ENCODE measurements at regions of chr10 and their contacts with region 1.

Region 1: GRCh38 chr10:98467506-98468346 is 21.0 kb upstream of the HPS1 start:
- DNase-seq: peak; percentile 93
- H3K4me3 Mint-ChIP-seq: peak overlapping the region; percentile 69
- H3K27ac Mint-ChIP-seq: no peak overlapping the region
- H3K4me1 Mint-ChIP-seq: no peaks in the 10 kb centered on the region
- H3K27me3 Mint-ChIP-seq: peaks cover 9% of the 10 kb centered on the region
- CTCF ChIP-seq: peak; percentile 83

Region 2: GRCh38 chr10:98262571-98262970 is 205.2 kb before region 1 on chr10:
- CTCF ChIA-PET with region 1: interaction called, 4 read pairs
- POLR2A ChIA-PET with region 1: no interaction called
- intact Hi-C with region 1: loop called (anchors 10 kb)
- DNase-seq: peak; percentile 70
- H3K4me3 Mint-ChIP-seq: no peak overlapping the region
- H3K27ac Mint-ChIP-seq: no peak overlapping the region
- H3K4me1 Mint-ChIP-seq: peaks cover 6% of the 10 kb centered on the region
- H3K27me3 Mint-ChIP-seq: no peaks in the 10 kb centered on the region
- CTCF ChIP-seq: peak; percentile 55

Region 3: GRCh38 chr10:98664331-98665042 is 196.8 kb after region 1 on chr10:
- CTCF ChIA-PET with region 1: interaction called, 13 read pairs
- POLR2A ChIA-PET with region 1: no interaction called
- intact Hi-C with region 1: loop called (anchors 1 kb)
- DNase-seq: peak; percentile 61
- H3K4me3 Mint-ChIP-seq: no peak overlapping the region
- H3K27ac Mint-ChIP-seq: no peak overlapping the region
- H3K4me1 Mint-ChIP-seq: no peaks in the 10 kb centered on the region
- H3K27me3 Mint-ChIP-seq: no peaks in the 10 kb centered on the region
- CTCF ChIP-seq: peak; percentile 81

Region 4: DNA sequence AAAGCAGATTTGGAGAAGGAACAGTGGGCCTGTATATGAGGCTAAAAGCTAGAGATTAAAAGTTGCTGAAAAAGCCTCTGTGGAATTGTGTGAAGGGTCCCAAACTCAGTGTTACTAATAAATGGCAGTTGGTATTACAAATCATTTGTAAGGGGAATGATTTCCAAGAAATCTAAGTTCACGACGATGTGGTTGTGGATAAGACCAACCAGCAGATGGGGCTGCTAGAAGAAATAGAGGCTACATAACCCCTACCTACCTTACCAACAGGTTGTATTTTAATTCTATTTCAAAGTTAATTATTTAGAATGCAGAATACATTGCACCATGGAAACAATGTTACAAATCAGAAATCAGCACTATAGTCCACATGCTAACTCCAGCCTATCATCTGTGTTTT is 390.8 kb after region 1 on chr10:
- CTCF ChIA-PET with region 1: no interaction called
- POLR2A ChIA-PET with region 1: no interaction called
- intact Hi-C with region 1: loop called (anchors 10 kb)
- DNase-seq: peak; percentile 22
- H3K4me3 Mint-ChIP-seq: no peak overlapping the region
- H3K27ac Mint-ChIP-seq: no peak overlapping the region
- H3K4me1 Mint-ChIP-seq: no peaks in the 10 kb centered on the region
- H3K27me3 Mint-ChIP-seq: peaks cover 14% of the 10 kb centered on the region
- CTCF ChIP-seq: no peak

Region 5: DNA sequence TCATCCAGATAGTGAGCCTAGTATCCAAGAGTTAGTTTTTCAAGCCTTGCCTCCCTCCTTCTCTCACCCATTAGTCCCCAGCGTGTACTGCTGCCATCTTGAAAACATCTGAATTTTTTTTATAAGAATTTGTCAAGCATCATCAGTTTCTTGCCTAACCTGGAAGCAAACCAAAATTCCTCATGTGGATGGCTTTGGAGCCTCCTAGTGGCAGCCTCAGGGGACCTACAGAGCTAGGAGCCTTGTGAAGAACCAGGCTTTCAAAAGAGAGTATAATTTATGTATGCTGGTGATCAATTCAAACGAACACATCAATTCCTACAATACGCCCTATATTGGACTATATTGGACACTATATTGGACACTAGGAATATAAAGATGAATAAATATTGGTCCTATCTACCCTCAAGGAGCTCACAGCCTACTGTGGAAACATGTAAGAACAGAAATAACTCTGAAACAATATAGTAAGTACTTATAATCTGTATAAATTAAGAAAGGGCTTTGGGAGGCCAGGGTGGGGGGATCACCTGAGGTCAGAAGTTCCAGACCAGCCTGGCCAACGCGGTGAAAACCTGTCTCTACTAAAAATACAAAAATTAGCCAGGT is 704.5 kb after region 1 on chr10:
- CTCF ChIA-PET with region 1: interaction called, 5 read pairs
- POLR2A ChIA-PET with region 1: no interaction called
- intact Hi-C with region 1: loop called (anchors 1 kb)
- DNase-seq: peak; percentile 65
- H3K4me3 Mint-ChIP-seq: no peak overlapping the region
- H3K27ac Mint-ChIP-seq: no peak overlapping the region
- H3K4me1 Mint-ChIP-seq: no peaks in the 10 kb centered on the region
- H3K27me3 Mint-ChIP-seq: peaks cover 46% of the 10 kb centered on the region
- CTCF ChIP-seq: peak; percentile 54

Region 6: DNA sequence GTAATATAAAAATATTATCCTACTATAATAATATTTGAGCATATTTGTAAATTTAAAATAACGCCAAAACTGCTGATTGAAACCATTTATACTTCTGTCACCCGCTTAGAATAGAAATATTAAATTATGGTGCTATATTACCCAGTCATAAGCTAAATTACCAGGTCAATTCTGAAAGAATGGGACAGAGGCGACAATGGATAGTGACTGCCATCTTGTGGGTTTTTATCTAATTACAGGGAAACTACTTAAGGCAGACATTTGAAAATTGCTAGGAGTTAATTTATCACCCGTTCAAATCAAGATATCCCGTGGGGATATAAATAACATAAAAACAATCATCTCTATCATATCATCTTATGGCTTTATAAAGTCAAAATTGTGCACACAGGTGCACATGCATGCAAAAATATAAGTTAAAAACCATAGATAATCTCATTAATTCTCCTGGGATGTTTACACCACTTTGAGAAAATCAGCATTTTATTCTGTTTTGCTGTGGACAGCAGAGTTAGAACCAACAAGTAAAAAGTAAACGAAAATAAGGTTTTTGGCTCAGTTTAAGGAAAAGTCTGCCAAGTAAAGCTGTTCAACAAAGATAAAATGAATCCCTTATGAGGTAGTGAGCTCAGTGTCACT is 809.2 kb after region 1 on chr10:
- CTCF ChIA-PET with region 1: interaction called, 12 read pairs
- POLR2A ChIA-PET with region 1: interaction called, 3 read pairs
- intact Hi-C with region 1: loop called (anchors 1 kb)
- DNase-seq: peak; percentile 34
- H3K4me3 Mint-ChIP-seq: no peak overlapping the region
- H3K27ac Mint-ChIP-seq: no peak overlapping the region
- H3K4me1 Mint-ChIP-seq: no peaks in the 10 kb centered on the region
- H3K27me3 Mint-ChIP-seq: peaks cover 12% of the 10 kb centered on the region
- CTCF ChIP-seq: peak; percentile 66